ENCODE measurements at regions of chr1 and their contacts with region 1.

Region 1: DNA sequence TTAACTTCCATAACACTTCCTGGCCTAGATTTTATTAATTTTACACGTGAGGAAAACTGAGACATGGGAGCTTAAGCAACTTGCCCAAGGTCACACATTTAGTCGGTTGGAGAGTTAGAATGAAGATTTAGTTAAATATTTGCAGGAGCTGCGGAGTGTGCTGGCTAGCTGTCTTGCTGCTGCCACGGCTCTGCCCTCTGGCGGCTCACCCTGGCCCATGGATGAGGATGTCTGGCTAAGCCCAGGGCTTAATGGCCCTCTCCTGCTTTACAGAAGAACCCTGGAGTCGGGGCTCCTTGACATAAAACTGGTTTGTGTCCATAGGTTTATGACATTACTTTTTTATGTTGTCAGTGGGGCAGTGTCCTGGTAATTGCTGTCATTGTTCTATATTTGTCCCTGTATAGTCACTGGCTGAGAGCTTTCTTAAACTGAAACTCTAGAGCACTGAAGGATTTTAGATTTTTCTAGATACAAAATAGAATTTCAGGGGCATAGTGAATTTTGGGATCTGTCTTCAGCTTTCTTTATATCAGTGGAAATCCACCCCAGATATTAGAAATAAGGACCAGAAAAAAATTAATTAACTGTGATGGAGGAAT is 88.9 kb upstream of the WLS start:
- DNase-seq: peak; percentile 5 to 31
- ATAC-seq: peak; percentile 60
- H3K4me3 ChIP-seq: no peak overlapping the region
- H3K27ac ChIP-seq: no peak overlapping the region
- H3K4me1 ChIP-seq: no peaks in the 10 kb centered on the region
- H3K27me3 ChIP-seq: no peaks in the 10 kb centered on the region
- CTCF ChIP-seq: peak; percentile 43 to 71 (median 59)
- POLR2A ChIP-seq: no peak

Region 2: DNA sequence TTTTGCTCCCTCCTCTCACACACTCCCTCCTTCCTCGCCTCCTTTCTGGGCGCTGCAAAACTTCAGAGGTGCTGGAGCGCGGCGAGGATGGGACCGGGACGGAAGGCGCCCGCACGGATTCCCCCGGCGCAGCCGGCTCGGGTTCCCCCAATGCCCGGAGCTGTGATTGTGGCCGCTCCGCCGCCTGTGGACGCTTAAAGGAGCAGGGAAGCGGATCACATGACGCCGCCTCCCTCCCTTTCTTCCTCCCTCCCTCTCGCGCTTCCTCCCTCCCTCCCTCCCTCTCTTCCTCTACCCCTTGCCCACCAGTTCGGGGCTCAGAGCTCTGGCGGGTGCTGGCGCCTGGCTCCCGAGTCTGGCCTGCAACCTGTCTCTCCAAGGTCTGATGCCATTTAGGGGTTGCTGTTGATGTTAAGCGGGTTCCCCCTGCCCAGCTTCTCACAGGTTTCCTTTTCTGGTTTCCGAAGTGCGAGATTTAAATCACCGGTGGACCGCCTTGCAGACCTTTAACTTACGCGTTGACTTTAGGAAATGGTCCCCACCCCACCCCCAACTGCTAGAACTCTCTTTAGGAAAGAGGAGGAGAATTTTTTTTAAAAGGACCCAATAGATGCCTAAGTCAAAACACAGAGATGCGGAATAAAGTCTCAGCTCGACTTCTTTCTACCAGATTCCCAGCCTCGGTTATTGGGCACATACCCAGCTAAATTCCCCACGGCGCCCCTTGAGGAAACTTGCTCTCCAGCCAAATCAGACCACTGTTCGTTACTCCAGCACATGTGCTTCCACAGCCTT is 88.6 kb before region 1 on chr1 and contains the start of gene WLS:
- in situ Hi-C with region 1: no loop called
- intact Hi-C with region 1: loop called (anchors 5 kb)
- DNase-seq: peak; percentile 70 to 71
- ATAC-seq: peak; percentile 77 to 84
- H3K4me3 ChIP-seq: peak within 1 kb of the TSS; percentile 68 to 79 (median 75)
- H3K27ac ChIP-seq: peak within 1 kb of the TSS; percentile 78 to 83 (median 80)
- H3K4me1 ChIP-seq: peaks cover 0 to 22% of the 10 kb centered on the region in 2 donors
- H3K27me3 ChIP-seq: no peaks in the 10 kb centered on the region
- CTCF ChIP-seq: peak in 2 of 5 experiments; percentile 31 to 37
- POLR2A ChIP-seq: peak; percentile 79 to 88
- total RNA-seq, gene WLS: 8.6 to 15.7 (median 11.6) TPM

Measured in gastrocnemius medialis (tissue), 4 donors.